ENCODE measurements at regions of chr11 and their contacts with region 1.

Region 1: GRCh38 chr11:1763796-1764661 is at the start of gene CTSD:
- H3K4me3 Mint-ChIP-seq: peak within 1 kb of the TSS; percentile 89
- H3K27ac Mint-ChIP-seq: peak within 1 kb of the TSS; percentile 96
- H3K4me1 Mint-ChIP-seq: peaks cover 58% of the 10 kb centered on the region
- H3K27me3 Mint-ChIP-seq: no peaks in the 10 kb centered on the region

Region 2: GRCh38 chr11:2269601-2270321 is 505.7 kb after region 1 on chr11:
- intact Hi-C with region 1: loop called (anchors 5 kb)
- H3K4me3 Mint-ChIP-seq: peak overlapping the region; percentile 84
- H3K27ac Mint-ChIP-seq: peak overlapping the region; percentile 92
- H3K4me1 Mint-ChIP-seq: peaks cover 53% of the 10 kb centered on the region
- H3K27me3 Mint-ChIP-seq: peaks cover 28% of the 10 kb centered on the region

Measured in dendritic cell treated with granulocyte-macrophage colony-stimulating factor and Interleukin-4, amounts not matched to agents 40 ng/mL and 50 ng/mL, for 4 days (primary cell).